K562 (cell line): ENCODE measurements at regions of chr4 and their contacts with region 1.

Region 1: GRCh38 chr4:3346146-3346545 is 53.3 kb downstream of the RGS12 start:
- DNase-seq: peak; percentile 68 to 73 (median 71)
- ATAC-seq: peak; percentile 97
- H3K4me3 ChIP-seq: no peak overlapping the region
- H3K27ac ChIP-seq: no peak overlapping the region
- H3K4me1 ChIP-seq: no peaks in the 10 kb centered on the region
- H3K27me3 ChIP-seq: no peaks in the 10 kb centered on the region
- CTCF ChIP-seq: peak; percentile 69 to 88 (median 79)
- EP300 ChIP-seq: no peak
- POLR2A ChIP-seq: no peak
- RAD21 ChIP-seq: peak; percentile 71 to 78

Region 2: DNA sequence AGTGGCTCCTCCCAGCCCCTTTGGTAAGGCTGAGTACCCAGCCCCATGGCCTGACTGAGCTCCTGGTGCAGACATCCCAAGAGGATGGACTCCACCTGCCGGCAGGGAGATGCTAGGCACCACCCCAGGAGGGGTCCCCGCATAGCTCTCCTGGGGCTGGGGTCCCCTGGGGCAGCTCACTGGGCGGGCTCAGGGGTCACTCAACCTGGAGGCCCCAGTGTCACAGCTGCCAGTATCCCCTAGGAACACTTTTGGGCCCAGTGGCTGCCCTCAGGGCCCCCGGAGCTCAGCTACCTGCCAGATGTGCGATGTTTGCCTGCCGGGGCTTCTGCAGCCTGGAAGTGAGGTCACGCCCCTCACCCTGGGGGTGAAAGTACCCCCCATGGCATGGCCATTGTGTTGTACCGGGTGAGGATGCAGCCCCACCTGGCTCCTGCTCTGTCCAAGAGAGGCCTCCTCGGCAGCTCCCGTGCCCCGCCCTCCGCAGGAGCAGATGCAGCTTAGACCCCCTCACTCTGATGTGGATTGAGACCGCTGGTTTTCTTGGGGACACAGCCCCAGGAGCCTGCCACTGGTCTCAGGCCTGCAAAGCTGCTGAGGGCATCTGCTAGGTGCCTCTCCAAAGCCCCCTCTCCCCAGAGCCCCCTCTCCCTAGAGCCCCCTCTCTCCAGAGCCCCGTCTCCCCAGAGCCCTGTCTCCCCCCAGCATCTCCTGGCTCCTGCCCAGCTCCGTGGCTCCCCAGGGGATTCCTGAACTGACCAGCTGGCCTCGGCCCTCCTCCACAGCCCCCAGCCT is 88.9 kb after region 1 on chr4:
- CTCF ChIA-PET with region 1: no interaction called
- POLR2A ChIA-PET with region 1: no interaction called
- in situ Hi-C with region 1: no loop called
- intact Hi-C with region 1: loop called (anchors 2 kb)
- DNase-seq: peak in 1 of 4 experiments; percentile 34
- ATAC-seq: peak; percentile 68
- H3K4me3 ChIP-seq: no peak overlapping the region
- H3K27ac ChIP-seq: no peak overlapping the region
- H3K4me1 ChIP-seq: peaks cover 0 to 57% of the 10 kb centered on the region in 2 experiments; a peak in 2 of 5 replicates
- H3K27me3 ChIP-seq: peaks cover 0 to 21% of the 10 kb centered on the region in 2 experiments; a peak in 2 of 5 replicates
- CTCF ChIP-seq: peak; percentile 34 to 52 (median 42); a peak in 4 of 6 replicates
- EP300 ChIP-seq: no peak
- POLR2A ChIP-seq: no peak
- RAD21 ChIP-seq: peak; percentile 14 to 46; a peak in 3 of 4 replicates

Region 3: DNA sequence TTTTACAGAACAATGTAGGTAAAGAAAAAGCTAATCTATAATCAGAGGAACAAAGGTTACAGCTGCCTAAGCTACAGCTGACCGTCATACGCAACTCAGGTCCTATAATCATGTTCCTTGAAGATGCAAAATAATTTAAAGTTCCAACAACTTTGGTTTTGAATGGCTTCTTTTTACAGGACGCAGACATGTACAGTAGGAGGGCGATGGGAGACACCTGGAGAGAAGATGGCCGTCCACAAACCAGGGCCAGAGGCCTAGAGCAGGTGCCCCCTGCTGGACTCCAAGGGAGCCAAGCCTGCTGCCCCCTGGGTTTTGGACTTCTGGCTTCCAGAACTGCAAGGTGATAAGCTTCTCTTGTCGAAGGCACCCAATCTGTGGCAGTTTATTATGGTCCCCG is 106.2 kb after region 1 on chr4:
- CTCF ChIA-PET with region 1: no interaction called
- POLR2A ChIA-PET with region 1: no interaction called
- in situ Hi-C with region 1: loop called (anchors 5 kb)
- intact Hi-C with region 1: no loop called
- DNase-seq: peak; percentile 65 to 73 (median 70)
- ATAC-seq: peak; percentile 95
- H3K4me3 ChIP-seq: no peak overlapping the region
- H3K27ac ChIP-seq: no peak overlapping the region
- H3K4me1 ChIP-seq: peaks cover 0 to 24% of the 10 kb centered on the region in 2 experiments; a peak in 2 of 5 replicates
- H3K27me3 ChIP-seq: peaks cover 0 to 11% of the 10 kb centered on the region in 2 experiments; a peak in 2 of 5 replicates
- CTCF ChIP-seq: peak; percentile 70 to 88 (median 71)
- EP300 ChIP-seq: 0 out of 2 replicates have a peak, but pooled peaks have one; percentile 11
- POLR2A ChIP-seq: no peak
- RAD21 ChIP-seq: peak; percentile 7 to 54; a peak in 2 of 4 replicates